ENCODE measurements at regions of chr5 and their contacts with region 1.

Region 1: GRCh38 chr5:132490486-132491367 is at the start of gene IRF1:
- DNase-seq: peak; percentile 96 to 97 (median 96)
- ATAC-seq: peak; percentile 92
- H3K4me3 ChIP-seq: peak within 1 kb of the TSS; percentile 21 to 58
- H3K27ac ChIP-seq: peak within 1 kb of the TSS; percentile 85 to 98 (median 96)
- H3K4me1 ChIP-seq: peaks cover 44% of the 10 kb centered on the region
- H3K27me3 ChIP-seq: no peaks in the 10 kb centered on the region
- CTCF ChIP-seq: peak in 3 of 7 experiments; percentile 8 to 19 (median 9)
- POLR2A ChIP-seq: peak; percentile 98 to 99 (median 99)
- total RNA-seq, gene IRF1: 12.2 to 15.5 TPM

Region 2: GRCh38 chr5:132215329-132215728 is 275.4 kb before region 1 on chr5:
- intact Hi-C with region 1: no loop called
- DNase-seq: peak; percentile 97 to 99 (median 98)
- ATAC-seq: peak; percentile 99
- H3K4me3 ChIP-seq: no peak overlapping the region
- H3K27ac ChIP-seq: peak overlapping the region; percentile 89 to 97 (median 93)
- H3K4me1 ChIP-seq: peaks cover 57% of the 10 kb centered on the region
- H3K27me3 ChIP-seq: no peaks in the 10 kb centered on the region
- CTCF ChIP-seq: peak in 1 of 7 experiments; percentile 19
- POLR2A ChIP-seq: peak; percentile 60 to 76 (median 74)

Region 3: GRCh38 chr5:132342291-132343180 is 148.2 kb before region 1 on chr5:
- intact Hi-C with region 1: no loop called
- DNase-seq: no peak
- ATAC-seq: no peak
- H3K4me3 ChIP-seq: no peak overlapping the region
- H3K27ac ChIP-seq: no peak overlapping the region
- H3K4me1 ChIP-seq: no peaks in the 10 kb centered on the region
- H3K27me3 ChIP-seq: no peaks in the 10 kb centered on the region
- CTCF ChIP-seq: no peak
- POLR2A ChIP-seq: no peak

Region 4: DNA sequence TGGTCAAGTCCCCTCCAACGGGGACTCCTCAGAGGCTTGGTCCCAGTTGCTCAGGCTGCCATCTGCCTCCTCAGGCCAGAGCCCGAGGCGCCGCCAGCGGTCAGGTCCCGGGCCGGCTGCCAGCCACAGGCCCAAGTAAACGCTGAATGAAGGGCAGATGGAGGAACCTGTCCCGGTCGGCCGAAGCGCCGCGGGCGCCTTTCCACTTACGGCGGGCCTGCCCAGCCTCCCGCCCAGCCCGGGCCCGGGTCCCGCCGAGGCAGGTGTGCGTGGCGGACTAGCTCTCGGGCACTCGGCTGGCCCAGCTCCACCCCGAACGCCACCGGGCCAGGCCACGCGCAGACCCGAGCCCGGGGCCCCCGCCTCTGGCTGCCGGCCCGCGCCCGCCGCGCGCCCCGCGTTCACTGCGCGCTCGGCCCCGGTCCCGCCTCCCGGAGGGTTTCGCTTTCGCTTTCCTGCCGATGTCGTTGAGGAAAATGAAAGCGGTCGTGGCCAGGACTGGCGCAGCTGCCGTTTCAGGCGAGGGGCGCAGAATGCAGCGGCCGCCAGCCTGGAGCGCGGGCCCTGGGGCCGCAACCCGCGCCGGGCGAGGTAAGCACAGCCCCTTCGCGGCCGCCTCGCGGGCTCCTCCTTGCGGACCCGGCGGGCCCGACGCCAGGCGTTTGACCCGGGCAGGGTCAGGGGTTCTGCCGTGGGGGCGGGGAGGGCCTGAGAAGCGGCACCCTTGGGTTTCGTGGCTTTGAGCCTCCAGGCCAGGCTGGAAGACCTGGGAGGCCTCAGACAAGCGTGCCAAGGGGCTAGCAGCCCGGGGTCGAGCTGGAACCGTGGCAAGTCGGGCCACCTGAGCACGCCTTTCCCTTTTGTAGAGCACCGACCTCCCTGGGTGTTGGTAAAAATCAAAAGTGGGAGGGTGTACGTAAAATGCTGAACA is 80.0 kb before region 1 on chr5:
- intact Hi-C with region 1: loop called (anchors 5 kb)
- DNase-seq: peak; percentile 89 to 92 (median 91)
- ATAC-seq: peak; percentile 85
- H3K4me3 ChIP-seq: peak overlapping the region; percentile 65 to 81
- H3K27ac ChIP-seq: peak overlapping the region; percentile 92 to 99 (median 98)
- H3K4me1 ChIP-seq: peaks cover 52% of the 10 kb centered on the region
- H3K27me3 ChIP-seq: no peaks in the 10 kb centered on the region
- CTCF ChIP-seq: peak; percentile 48 to 69 (median 57)
- POLR2A ChIP-seq: peak; percentile 64 to 72 (median 66)